ENCODE measurements at regions of chr7 and their contacts with region 1.

Region 1: DNA sequence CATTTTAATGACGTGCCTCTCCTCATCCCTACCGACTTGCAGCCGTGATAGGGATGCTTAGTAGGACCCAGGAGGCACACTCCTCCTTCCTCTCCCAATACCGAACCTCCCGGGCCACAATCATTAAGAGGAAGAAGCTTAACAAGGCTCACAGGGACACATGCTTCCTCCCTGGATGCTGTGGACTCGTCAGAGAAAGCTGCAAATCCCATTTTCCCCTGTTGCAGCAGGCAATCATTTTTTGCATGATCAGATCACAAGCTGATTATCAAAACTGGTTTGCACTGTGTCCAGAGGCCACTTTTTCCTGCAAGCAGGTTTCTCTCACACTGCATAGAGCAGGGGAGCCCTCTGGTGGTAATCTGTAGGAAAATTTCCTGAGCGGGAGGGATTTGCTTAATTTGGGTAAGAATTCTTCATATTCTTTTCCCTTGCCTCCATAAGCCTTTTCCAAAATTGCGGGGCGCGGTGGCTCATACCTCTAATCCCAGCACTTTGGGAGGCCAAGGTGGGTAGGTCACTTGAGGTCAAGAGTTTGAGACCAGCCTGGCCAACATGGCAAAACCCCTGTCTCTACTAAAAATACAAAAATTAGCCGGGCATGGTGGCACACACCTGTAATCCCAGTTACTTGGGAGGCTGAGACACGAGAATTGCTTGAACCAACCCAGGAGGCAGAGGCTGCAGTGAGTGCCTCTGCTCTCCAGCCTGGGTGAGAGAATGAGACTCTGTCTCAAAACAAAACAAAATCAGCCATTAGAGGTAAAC is 16.1 kb upstream of the LAMB4 start:
- DNase-seq: peak; percentile 80
- H3K4me3 ChIP-seq: peak overlapping the region; percentile 39; the same call in 1 of the 2 replicates
- H3K27ac ChIP-seq: no peak overlapping the region
- H3K27me3 ChIP-seq: no peaks in the 10 kb centered on the region
- CTCF ChIP-seq: peak; percentile 98

Region 2: GRCh38 chr7:107879400-107880035 is 266.7 kb before region 1 on chr7:
- CTCF ChIA-PET with region 1: interaction called, 36 read pairs
- POLR2A ChIA-PET with region 1: no interaction called
- DNase-seq: no peak
- H3K4me3 ChIP-seq: no peak overlapping the region
- H3K27ac ChIP-seq: no peak overlapping the region
- H3K27me3 ChIP-seq: no peaks in the 10 kb centered on the region
- CTCF ChIP-seq: peak; percentile 81

Region 3: DNA sequence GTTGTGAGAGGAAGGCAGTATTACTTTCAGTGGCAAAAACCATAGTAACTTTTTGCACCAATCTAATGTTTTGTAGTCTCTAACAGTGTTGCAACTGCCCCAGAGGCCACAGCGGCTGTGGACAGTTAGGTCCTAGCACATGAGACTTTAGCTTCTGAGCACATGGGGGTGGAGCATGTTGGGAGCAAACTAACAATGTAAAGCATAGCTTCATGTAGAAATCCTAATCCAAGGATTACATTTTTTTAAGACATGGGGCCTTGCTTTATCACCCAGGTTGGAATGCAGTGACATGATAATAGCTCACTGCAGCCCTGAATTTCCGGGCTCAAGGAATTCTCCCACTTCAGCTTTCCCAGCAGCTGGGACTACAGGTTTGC is 192.3 kb before region 1 on chr7:
- CTCF ChIA-PET with region 1: interaction called, 12 read pairs
- POLR2A ChIA-PET with region 1: no interaction called
- DNase-seq: no peak
- H3K4me3 ChIP-seq: no peak overlapping the region
- H3K27ac ChIP-seq: no peak overlapping the region
- H3K27me3 ChIP-seq: no peaks in the 10 kb centered on the region
- CTCF ChIP-seq: no peak

Region 4: DNA sequence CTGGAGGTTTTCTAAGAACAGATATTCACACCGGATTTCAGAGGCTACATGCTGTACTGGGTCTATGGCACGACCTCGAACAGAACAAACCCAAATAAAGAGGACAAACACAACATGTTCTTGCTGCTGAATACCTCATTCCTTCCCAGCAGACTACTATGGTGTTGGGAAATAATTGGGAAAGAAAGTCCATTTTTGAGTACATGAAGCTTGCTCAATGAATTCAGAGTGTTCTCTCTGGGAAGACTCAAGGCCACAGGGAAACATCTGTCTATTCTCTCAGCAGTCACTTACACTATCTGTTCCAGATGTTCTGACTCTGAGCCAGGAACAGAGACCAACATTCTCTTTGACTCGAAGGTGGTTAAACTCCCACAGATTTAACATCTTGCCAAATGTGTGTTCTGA is 174.2 kb before region 1 on chr7:
- CTCF ChIA-PET with region 1: interaction called, 18 read pairs
- POLR2A ChIA-PET with region 1: no interaction called
- DNase-seq: peak; percentile 70
- H3K4me3 ChIP-seq: no peak overlapping the region
- H3K27ac ChIP-seq: no peak overlapping the region
- H3K27me3 ChIP-seq: no peaks in the 10 kb centered on the region
- CTCF ChIP-seq: no peak

Region 5: GRCh38 chr7:107995184-107996071 is 150.8 kb before region 1 on chr7:
- CTCF ChIA-PET with region 1: interaction called, 17 read pairs
- POLR2A ChIA-PET with region 1: interaction called, 14 read pairs
- DNase-seq: no peak
- H3K4me3 ChIP-seq: no peak overlapping the region
- H3K27ac ChIP-seq: peak overlapping the region; percentile 86
- H3K27me3 ChIP-seq: no peaks in the 10 kb centered on the region
- CTCF ChIP-seq: no peak

Region 6: DNA sequence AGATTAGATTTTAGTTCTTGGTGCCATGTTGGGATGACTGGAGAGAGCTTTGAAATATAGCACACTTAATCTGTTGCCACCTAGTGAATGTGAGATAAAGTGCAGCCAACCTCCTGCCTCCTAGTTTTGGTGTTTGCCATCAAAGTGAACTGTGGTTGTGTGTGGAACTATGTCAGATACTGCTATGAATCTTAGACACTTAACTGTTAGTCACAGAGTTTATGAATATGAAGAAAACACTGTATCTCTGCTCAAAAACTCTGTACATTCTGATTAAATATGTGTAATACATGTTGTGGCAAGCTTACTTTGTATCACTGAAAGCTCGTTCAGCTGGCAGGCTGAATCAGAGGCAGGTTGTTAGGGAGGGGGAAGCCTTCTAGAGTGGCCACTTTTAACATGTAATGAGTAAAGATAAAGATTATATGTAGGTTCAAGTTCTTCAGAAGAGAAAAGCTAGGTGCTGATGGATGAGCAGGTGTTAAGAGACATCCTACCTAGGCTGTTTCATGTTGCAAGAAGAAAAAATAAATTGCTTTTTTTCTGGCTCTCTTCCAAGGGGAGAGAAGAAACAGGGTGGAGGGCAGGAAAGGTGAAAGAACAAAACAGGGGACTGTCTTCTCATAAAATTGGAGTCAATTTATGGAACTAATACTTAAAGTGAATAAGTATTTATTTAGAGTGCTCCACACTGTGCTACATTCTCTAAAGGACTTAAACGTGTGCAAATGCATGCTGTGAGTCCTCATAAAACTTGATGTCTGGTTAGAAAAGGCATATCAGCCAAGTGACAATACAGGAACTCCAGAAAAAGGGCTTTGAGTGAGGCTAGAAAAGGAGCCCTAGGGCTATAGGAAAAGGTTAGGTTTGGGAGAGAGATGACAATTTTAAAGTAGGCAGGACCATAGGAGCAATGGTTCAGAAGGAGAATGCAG is 129.1 kb before region 1 on chr7:
- CTCF ChIA-PET with region 1: interaction called, 14 read pairs
- POLR2A ChIA-PET with region 1: interaction called, 3 read pairs
- DNase-seq: no peak
- H3K4me3 ChIP-seq: no peak overlapping the region
- H3K27ac ChIP-seq: no peak overlapping the region
- H3K27me3 ChIP-seq: no peaks in the 10 kb centered on the region
- CTCF ChIP-seq: peak; percentile 54

Region 7: DNA sequence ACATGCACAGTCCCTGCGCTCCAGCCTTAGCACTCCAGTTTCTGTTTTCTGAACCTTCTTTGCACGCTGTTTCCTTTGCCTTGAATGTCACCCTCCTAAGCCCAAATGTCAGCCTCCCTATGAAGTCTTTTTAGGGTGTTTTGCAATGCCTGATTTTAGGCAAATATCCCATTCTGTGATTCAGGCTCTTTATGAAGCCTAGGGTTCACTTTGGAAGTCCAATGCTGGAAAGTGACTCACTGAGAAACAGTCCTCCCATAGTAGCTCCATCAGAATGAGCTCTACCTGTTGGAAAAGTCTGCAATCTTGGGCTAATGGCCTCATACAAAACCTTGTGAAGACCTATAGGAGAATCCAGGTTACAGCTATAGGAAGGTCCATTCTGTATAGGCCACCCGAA is 21.4 kb before region 1 on chr7:
- CTCF ChIA-PET with region 1: no interaction called
- POLR2A ChIA-PET with region 1: no interaction called
- DNase-seq: no peak
- H3K4me3 ChIP-seq: no peak overlapping the region
- H3K27ac ChIP-seq: no peak overlapping the region
- H3K27me3 ChIP-seq: no peaks in the 10 kb centered on the region
- CTCF ChIP-seq: no peak

Measured in AG04450 (cell line).